Activated naive CD4-positive, alpha-beta T cell treated with anti-CD3 and anti-CD28 coated beads for 36 hours (primary cell): ENCODE measurements at regions of chr4 and their contacts with region 1.

Region 1: GRCh38 chr4:26936284-26937065 is 75.8 kb downstream of the STIM2 start:
- DNase-seq: no peak
- H3K4me3 Mint-ChIP-seq: no peak overlapping the region
- H3K27ac Mint-ChIP-seq: no peak overlapping the region
- H3K4me1 Mint-ChIP-seq: peaks cover 53% of the 10 kb centered on the region
- H3K27me3 Mint-ChIP-seq: no peaks in the 10 kb centered on the region

Region 2: DNA sequence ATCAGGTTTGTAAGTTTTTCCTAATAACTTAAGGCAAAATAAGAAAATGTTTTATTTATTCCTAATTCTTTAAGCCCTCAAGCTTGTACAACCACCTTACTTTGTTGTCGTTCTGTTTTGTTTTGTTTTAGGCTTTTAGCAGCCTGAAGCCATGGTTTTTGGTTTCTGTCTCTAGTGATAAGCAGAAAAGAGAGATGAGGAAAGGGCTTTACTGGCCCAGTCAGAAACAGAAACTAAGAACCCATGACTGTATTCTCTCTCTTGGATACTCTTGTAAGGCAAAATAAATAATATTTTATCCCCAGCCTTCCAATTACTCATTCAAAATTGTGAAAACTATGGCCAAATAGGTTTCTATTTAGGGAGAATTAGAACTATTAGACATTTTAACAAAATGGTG is 323.2 kb before region 1 on chr4:
- CTCF ChIA-PET with region 1: no interaction called
- intact Hi-C with region 1: no loop called
- DNase-seq: no peak
- H3K4me3 Mint-ChIP-seq: no peak overlapping the region
- H3K27ac Mint-ChIP-seq: no peak overlapping the region
- H3K4me1 Mint-ChIP-seq: peaks cover 9% of the 10 kb centered on the region
- H3K27me3 Mint-ChIP-seq: no peaks in the 10 kb centered on the region

Region 3: GRCh38 chr4:26766141-26766540 is 170.3 kb before region 1 on chr4:
- CTCF ChIA-PET with region 1: no interaction called
- intact Hi-C with region 1: no loop called
- DNase-seq: no peak
- H3K4me3 Mint-ChIP-seq: no peak overlapping the region
- H3K27ac Mint-ChIP-seq: no peak overlapping the region
- H3K4me1 Mint-ChIP-seq: peaks cover 2% of the 10 kb centered on the region
- H3K27me3 Mint-ChIP-seq: no peaks in the 10 kb centered on the region

Region 4: DNA sequence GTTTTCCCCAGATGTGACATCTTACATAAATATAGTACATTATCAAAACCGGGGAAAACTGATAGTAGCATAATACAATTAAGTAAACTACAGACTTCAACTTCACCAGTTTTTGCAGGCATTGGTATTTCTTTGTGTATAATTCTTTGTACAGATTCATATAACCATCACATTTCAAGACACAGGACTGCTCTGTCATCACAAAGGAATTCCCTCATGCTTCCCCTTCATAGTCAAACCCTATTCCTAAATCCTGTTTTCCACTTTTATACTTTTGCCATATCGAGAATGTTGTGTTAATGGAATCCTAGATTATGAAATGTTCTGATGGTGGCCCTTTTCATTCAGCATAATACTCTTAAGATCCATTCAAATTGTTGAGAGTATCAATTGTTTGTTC is 39.8 kb before region 1 on chr4:
- CTCF ChIA-PET with region 1: no interaction called
- intact Hi-C with region 1: loop called (anchors 5 kb)
- DNase-seq: no peak
- H3K4me3 Mint-ChIP-seq: no peak overlapping the region
- H3K27ac Mint-ChIP-seq: no peak overlapping the region
- H3K4me1 Mint-ChIP-seq: peaks cover 66% of the 10 kb centered on the region
- H3K27me3 Mint-ChIP-seq: no peaks in the 10 kb centered on the region